Heart right ventricle (tissue), 16 donors: ENCODE measurements at regions of chr3 and their contacts with region 1.

Region 1: GRCh38 chr3:71130471-71131374 is 452.8 kb downstream of the FOXP1 start:
- DNase-seq: peak; percentile 33 to 66
- ATAC-seq: peak; percentile 48 to 80 (median 72)
- H3K4me3 ChIP-seq: peak overlapping the region; percentile 33 to 65 (median 58)
- H3K27ac ChIP-seq: peak overlapping the region; percentile 74 to 94 (median 87)
- H3K4me1 ChIP-seq: peaks cover 10 to 82% (median 62%) of the 10 kb centered on the region in 9 donors
- H3K27me3 ChIP-seq: no peaks in the 10 kb centered on the region
- CTCF ChIP-seq: no peak

Region 2: DNA sequence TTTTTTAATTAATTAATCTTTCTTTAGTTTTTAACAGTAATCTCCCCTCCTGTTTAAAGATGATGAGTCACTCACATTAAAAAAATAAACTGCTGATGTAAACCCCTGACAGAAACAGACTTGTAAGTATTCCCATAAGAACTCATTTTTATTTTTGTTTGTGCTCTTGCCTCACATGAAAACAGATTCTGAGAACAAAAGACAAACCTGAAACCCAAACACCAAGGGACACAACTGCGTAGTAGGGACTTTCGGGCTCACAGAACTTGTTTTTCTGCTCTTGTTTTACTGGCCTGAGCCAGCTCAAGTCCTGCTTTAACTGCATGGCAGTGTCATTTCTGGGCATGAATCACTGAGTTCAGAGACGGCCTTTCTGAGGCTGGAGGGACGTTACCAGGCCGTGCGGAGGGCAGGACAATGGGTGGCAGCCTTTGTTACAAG is 148.0 kb before region 1 on chr3:
- intact Hi-C with region 1: loop called in 1 of 10 experiments (anchors 5 kb)
- DNase-seq: peak; percentile 15 to 54
- ATAC-seq: peak; percentile 53 to 86 (median 65)
- H3K4me3 ChIP-seq: peak overlapping the region in 3 of 10 donors; percentile 1 to 5 (median 4)
- H3K27ac ChIP-seq: peak overlapping the region; percentile 64 to 90 (median 82)
- H3K4me1 ChIP-seq: peaks cover 14 to 79% (median 51%) of the 10 kb centered on the region in 9 donors
- H3K27me3 ChIP-seq: no peaks in the 10 kb centered on the region
- CTCF ChIP-seq: no peak

Region 3: GRCh38 chr3:71050538-71051258 is 80.0 kb before region 1 on chr3:
- intact Hi-C with region 1: loop called in 1 of 10 experiments (anchors 5 kb)
- DNase-seq: no peak
- ATAC-seq: no peak
- H3K4me3 ChIP-seq: no peak overlapping the region
- H3K27ac ChIP-seq: peak overlapping the region in 9 of 10 donors; percentile 18 to 96 (median 64)
- H3K4me1 ChIP-seq: peaks cover 21 to 100% (median 94%) of the 10 kb centered on the region in 9 donors
- H3K27me3 ChIP-seq: no peaks in the 10 kb centered on the region
- CTCF ChIP-seq: no peak

Region 4: GRCh38 chr3:71069797-71070196 is 60.9 kb before region 1 on chr3:
- intact Hi-C with region 1: loop called in 6 of 10 experiments (anchors 1 to 5 kb)
- DNase-seq: peak; percentile 56 to 75
- ATAC-seq: peak; percentile 45 to 70 (median 58)
- H3K4me3 ChIP-seq: no peak overlapping the region
- H3K27ac ChIP-seq: peak overlapping the region in 4 of 10 donors; percentile 15 to 50 (median 20)
- H3K4me1 ChIP-seq: peaks cover 5 to 64% (median 51%) of the 10 kb centered on the region in 9 donors
- H3K27me3 ChIP-seq: no peaks in the 10 kb centered on the region
- CTCF ChIP-seq: peak; percentile 29 to 74 (median 62)

Region 5: DNA sequence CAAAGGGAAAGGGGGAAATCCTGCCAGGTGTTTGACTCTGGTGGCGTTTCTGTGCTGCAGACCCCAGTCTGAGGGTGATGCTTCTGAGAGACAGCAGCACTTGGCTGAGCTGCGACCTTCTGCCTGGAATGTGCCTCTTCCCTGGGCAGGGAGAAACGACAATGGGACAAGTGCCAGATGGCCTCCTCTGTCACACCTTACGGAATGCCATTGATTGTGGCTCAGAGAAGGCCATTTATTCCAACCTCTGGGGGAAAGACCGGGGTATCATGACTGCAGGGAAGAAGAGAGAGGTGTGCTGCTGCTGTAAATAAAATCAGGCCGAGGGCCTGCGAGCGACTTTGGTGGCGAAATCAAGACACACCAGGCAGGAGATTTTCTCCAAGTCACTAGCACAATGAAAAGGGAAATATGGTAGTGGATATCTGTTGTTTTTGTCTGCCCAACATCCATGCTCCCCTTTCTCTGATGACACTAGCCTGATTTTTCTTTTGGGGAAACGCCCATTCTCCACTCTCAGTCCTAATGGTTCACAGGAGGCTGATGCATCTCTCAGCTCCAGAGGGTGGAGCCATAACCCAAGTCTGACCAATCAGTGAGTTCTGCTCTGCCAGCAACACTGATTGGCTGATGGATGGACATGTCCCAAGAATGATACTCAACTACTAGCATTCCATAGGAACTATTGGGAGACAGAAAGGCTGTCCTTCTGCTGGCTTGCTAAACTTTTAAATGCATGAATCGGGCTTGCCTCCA is 116.7 kb after region 1 on chr3:
- intact Hi-C with region 1: loop called in 5 of 10 experiments (anchors 2 to 5 kb)
- DNase-seq: peak in 1 of 2 donors; percentile 24
- ATAC-seq: peak in 6 of 8 donors; percentile 24 to 66 (median 46)
- H3K4me3 ChIP-seq: no peak overlapping the region
- H3K27ac ChIP-seq: peak overlapping the region in 4 of 10 donors; percentile 40 to 82 (median 67)
- H3K4me1 ChIP-seq: peaks cover 8 to 76% (median 48%) of the 10 kb centered on the region in 9 donors
- H3K27me3 ChIP-seq: no peaks in the 10 kb centered on the region
- CTCF ChIP-seq: peak in 2 of 9 donors; percentile 14 to 15